A549 (cell line): ENCODE measurements at regions of chr11 and their contacts with region 1.

Region 1: GRCh38 chr11:447923-448731 is 2.0 kb upstream of the PTDSS2 start:
- DNase-seq: peak; percentile 94 to 96
- ATAC-seq: peak; percentile 77 to 82
- H3K4me3 ChIP-seq: peak overlapping the region; percentile 48
- H3K27ac ChIP-seq: peak overlapping the region; percentile 77 to 93
- H3K4me1 ChIP-seq: peaks cover 18% of the 10 kb centered on the region
- CTCF ChIP-seq: peak; percentile 91
- EP300 ChIP-seq: no peak
- POLR2A ChIP-seq: peak; percentile 46
- RAD21 ChIP-seq: peak; percentile 87 to 90

Region 2: GRCh38 chr11:207208-207862 is 240.8 kb before region 1 on chr11 and contains the starts of genes BET1L and RIC8A:
- CTCF ChIA-PET with region 1: interaction called, 4 read pairs
- POLR2A ChIA-PET with region 1: interaction called, 10 read pairs
- DNase-seq: peak; percentile 96 to 99
- ATAC-seq: peak; percentile 72 to 84
- H3K4me3 ChIP-seq: peak within 1 kb of the TSS; percentile 100
- H3K27ac ChIP-seq: peak within 1 kb of the TSS; percentile 90 to 94
- H3K4me1 ChIP-seq: peaks cover 26% of the 10 kb centered on the region
- CTCF ChIP-seq: no peak
- EP300 ChIP-seq: no peak
- POLR2A ChIP-seq: peak; percentile 96
- RAD21 ChIP-seq: no peak
- polyA plus RNA-seq, gene BET1L: 44.5 and 54.0 TPM in 2 replicates
- polyA plus RNA-seq, gene RIC8A: 82.0 and 119 TPM in 2 replicates

Region 3: DNA sequence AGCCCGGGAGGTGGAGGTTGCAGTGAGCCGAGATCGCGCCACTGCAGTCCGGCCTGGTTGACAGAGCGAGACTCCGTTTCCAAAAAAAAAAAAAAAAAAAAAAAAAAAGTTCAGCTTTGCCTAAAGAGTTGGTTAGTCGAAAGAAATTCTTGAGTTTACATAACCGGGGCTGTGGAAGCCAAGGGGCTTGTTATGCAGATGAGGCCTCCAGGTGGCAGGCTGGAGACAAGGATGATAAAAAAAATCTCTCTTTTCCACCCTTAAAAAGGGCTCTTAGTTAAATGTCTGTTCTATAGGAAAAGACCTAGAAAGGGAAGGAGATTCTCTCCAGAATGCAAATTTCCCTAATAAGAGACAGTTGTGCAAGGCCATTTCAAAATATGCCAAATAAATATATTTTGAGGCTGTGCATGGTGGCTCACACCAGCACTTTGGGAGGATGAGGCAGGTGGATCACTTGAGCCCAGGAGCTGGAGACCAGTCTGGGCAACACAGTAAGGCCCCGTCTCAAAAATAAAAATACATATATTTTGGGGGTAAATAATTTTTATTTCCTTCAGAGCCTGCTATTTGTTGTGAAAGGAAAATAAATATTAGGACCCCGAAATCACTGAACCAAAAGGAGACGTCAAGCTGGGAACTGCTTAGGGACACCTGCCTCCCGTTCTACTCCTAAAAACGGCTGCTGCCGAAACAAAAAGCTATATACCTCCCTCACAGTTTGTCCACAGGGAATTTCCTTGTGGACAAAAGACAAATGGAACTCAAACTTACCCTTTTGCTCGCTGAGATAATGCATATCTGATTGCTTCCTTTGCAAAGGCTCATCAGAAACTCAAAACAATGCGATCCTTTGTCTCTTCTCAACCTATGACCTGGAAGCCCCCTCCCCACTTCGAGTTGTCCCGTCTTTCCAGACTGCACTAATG is 142.9 kb before region 1 on chr11:
- CTCF ChIA-PET with region 1: interaction called, 33 read pairs
- POLR2A ChIA-PET with region 1: interaction called, 3 read pairs
- DNase-seq: peak; percentile 74 to 84
- ATAC-seq: peak; percentile 53 to 62; a peak in 4 of 6 replicates
- H3K4me3 ChIP-seq: no peak overlapping the region
- H3K27ac ChIP-seq: peak overlapping the region in 1 of 2 experiments; percentile 69; a peak in 3 of 6 replicates
- H3K4me1 ChIP-seq: peaks cover 22% of the 10 kb centered on the region; the same call in 2 of the 3 replicates
- CTCF ChIP-seq: peak; percentile 68
- EP300 ChIP-seq: no peak
- POLR2A ChIP-seq: no peak
- RAD21 ChIP-seq: peak; percentile 69 to 70

Region 4: DNA sequence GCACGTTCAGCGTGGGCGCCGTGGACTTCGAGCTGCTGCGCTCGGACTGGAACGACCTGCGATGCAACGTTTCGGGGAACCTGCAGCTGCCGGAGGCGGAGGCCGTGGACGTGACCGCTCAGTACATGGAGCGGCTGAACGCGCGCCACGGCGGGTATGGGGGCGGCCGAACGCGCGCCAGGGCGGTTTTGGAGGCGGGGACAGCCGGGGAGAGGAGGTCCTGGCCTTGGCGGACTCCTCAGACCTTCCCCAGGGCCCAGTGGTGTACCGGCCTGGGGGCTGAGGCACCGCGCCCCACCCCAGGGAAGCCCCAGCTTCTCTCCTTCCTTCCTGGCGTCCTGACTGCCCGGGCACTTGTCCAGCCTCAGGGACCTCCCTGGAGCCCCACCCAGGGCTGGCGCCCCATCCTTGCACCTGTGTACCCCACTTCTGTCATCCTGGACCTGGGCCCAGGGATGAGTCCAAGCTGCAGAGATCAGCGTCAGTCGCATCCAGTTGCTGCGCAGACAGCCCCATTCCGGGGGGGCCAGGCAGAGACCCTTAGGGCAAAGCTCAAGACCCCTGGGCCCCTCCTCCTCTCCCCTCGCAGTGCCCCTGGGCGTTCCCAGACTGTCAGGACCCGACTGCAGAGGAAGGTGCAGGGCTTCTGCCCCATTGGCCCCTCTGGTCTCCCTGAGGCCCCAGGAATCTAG is 70.8 kb before region 1 on chr11:
- CTCF ChIA-PET with region 1: no interaction called
- POLR2A ChIA-PET with region 1: no interaction called
- DNase-seq: no peak
- ATAC-seq: no peak
- H3K4me3 ChIP-seq: no peak overlapping the region
- H3K27ac ChIP-seq: no peak overlapping the region
- H3K4me1 ChIP-seq: no peaks in the 10 kb centered on the region
- CTCF ChIP-seq: no peak
- EP300 ChIP-seq: no peak
- POLR2A ChIP-seq: no peak
- RAD21 ChIP-seq: no peak

Region 5: GRCh38 chr11:396948-397548 is 51.1 kb before region 1 on chr11:
- CTCF ChIA-PET with region 1: interaction called, 15 read pairs
- POLR2A ChIA-PET with region 1: interaction called, 9 read pairs
- DNase-seq: no peak
- ATAC-seq: no peak
- H3K4me3 ChIP-seq: no peak overlapping the region
- H3K27ac ChIP-seq: peak overlapping the region in 1 of 2 experiments; percentile 98; a peak in 1 of 6 replicates
- H3K4me1 ChIP-seq: peaks cover 37% of the 10 kb centered on the region
- CTCF ChIP-seq: no peak
- EP300 ChIP-seq: no peak
- POLR2A ChIP-seq: no peak
- RAD21 ChIP-seq: no peak

Region 6: DNA sequence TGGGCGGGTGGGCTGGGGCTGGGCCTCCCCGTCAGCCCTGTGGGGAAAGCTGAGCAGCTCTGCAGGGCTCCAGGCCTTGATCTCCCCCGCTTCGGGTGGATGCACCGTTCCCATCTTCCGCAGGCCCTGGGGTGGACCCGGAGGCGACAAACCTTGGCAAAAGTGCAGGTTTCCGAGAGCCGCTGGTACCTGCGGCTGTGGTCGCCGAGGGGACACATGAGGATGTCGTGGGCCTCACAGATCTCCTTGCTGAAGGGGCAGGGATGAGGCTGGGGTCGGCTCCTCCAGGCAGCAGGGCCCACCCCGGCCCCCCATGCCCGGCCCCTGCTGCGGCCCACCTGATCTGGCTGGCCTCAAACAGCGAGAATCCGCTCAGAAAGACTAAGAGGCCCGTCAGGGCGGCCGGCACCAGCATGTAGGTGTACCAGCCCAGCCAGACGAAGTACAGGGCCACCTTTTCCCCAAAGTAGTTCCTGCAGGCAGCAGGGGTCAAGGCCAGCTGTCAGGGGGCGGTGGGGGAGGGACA is 18.1 kb before region 1 on chr11:
- CTCF ChIA-PET with region 1: interaction called, 29 read pairs
- POLR2A ChIA-PET with region 1: interaction called, 4 read pairs
- DNase-seq: peak in 1 of 2 experiments; percentile 58
- ATAC-seq: peak; percentile 27 to 58; a peak in 4 of 6 replicates
- H3K4me3 ChIP-seq: no peak overlapping the region
- H3K27ac ChIP-seq: no peak overlapping the region
- H3K4me1 ChIP-seq: peaks cover 5% of the 10 kb centered on the region; the same call in 1 of the 3 replicates
- CTCF ChIP-seq: no peak
- EP300 ChIP-seq: no peak
- POLR2A ChIP-seq: no peak
- RAD21 ChIP-seq: no peak

Region 7: DNA sequence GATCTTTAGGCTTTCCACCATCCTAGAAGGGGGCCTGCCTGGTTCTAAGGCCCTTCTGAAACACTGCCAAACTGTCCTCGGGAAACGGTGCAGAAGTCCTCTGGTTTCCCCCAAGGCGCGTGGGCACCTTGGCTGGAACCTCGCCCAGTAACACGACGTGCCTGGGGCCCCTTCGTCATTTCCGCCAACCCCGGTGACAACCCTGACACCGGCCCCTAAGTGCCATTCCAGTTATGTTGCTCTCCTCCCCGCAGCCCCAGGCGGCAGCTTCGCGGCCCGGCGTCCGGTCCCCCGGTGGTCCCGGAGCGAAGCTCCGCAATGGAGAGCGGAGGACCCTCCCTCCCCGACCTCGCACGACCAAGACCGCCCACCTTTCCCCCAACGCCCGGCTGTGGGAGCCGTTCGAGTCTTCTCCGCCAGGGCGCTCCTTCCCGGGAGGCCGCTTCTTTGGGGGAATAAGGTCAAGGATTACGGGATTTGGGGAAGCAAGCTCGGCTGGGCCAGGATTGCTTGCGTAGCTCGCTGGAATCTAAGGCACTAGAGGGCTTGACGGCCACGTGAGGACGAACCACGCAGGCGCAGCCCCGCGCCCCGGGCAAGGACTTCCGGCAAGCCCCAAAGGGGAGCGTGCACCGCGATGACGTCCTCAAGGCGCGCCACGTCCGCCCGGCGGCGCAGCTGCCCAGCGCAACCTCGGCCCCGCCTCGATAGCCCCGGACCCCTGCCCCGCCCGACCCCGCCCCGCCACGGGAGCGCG is 58.3 kb after region 1 on chr11:
- CTCF ChIA-PET with region 1: interaction called, 5 read pairs
- POLR2A ChIA-PET with region 1: interaction called, 18 read pairs
- DNase-seq: peak; percentile 96 to 99
- ATAC-seq: peak; percentile 77 to 83
- H3K4me3 ChIP-seq: peak overlapping the region; percentile 83
- H3K27ac ChIP-seq: peak overlapping the region; percentile 97
- H3K4me1 ChIP-seq: peaks cover 15% of the 10 kb centered on the region; the same call in 2 of the 3 replicates
- CTCF ChIP-seq: no peak
- EP300 ChIP-seq: no peak
- POLR2A ChIP-seq: no peak; the same call in 1 of the 2 replicates
- RAD21 ChIP-seq: no peak

Region 8: GRCh38 chr11:568306-569157 is 120.4 kb after region 1 on chr11:
- CTCF ChIA-PET with region 1: no interaction called
- POLR2A ChIA-PET with region 1: no interaction called
- DNase-seq: peak; percentile 90 to 97
- ATAC-seq: peak; percentile 89 to 90
- H3K4me3 ChIP-seq: peak overlapping the region; percentile 91
- H3K27ac ChIP-seq: peak overlapping the region; percentile 95 to 97
- H3K4me1 ChIP-seq: peaks cover 14% of the 10 kb centered on the region
- CTCF ChIP-seq: no peak
- EP300 ChIP-seq: no peak
- POLR2A ChIP-seq: peak; percentile 62
- RAD21 ChIP-seq: no peak

Region 9: GRCh38 chr11:1772270-1773130 is 1324.4 kb after region 1 on chr11:
- CTCF ChIA-PET with region 1: no interaction called
- POLR2A ChIA-PET with region 1: no interaction called
- DNase-seq: peak; percentile 94 to 95
- ATAC-seq: peak; percentile 95 to 98
- H3K4me3 ChIP-seq: no peak overlapping the region
- H3K27ac ChIP-seq: peak overlapping the region; percentile 97 to 99
- H3K4me1 ChIP-seq: peaks cover 42% of the 10 kb centered on the region
- CTCF ChIP-seq: no peak
- EP300 ChIP-seq: peak in 1 of 2 experiments; percentile 54; a peak in 1 of 5 replicates
- POLR2A ChIP-seq: no peak
- RAD21 ChIP-seq: no peak